Activated naive CD4-positive, alpha-beta T cell treated with anti-CD3 and anti-CD28 coated beads for 36 hours (primary cell): ENCODE measurements at regions of chr1 and their contacts with region 1.

Region 1: DNA sequence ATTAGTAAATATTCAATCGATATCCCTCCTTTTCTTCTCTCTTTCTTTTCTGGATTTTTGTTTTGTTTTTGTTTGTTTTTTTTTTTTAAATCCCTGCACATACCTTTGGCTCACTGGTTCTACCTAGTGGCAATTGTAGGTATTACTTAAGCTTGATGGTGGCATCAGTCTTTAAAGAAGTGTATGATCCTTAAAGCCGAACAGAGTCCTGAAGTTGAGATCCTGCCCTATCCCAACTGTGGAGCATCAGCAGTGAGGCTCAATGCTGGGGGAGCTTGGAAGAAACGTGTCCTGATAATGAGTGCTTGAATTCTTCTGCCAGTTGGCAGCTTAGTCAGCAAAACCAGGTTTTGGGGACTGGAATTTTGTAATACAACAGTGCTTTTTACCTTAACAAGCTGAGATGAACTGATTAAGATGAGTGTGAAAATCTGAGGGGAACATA is 60.8 kb downstream of the FASLG start:
- DNase-seq: no peak
- H3K4me3 Mint-ChIP-seq: no peak overlapping the region
- H3K27ac Mint-ChIP-seq: no peak overlapping the region
- H3K4me1 Mint-ChIP-seq: peaks cover 33% of the 10 kb centered on the region
- H3K27me3 Mint-ChIP-seq: peaks cover 3% of the 10 kb centered on the region

Region 2: DNA sequence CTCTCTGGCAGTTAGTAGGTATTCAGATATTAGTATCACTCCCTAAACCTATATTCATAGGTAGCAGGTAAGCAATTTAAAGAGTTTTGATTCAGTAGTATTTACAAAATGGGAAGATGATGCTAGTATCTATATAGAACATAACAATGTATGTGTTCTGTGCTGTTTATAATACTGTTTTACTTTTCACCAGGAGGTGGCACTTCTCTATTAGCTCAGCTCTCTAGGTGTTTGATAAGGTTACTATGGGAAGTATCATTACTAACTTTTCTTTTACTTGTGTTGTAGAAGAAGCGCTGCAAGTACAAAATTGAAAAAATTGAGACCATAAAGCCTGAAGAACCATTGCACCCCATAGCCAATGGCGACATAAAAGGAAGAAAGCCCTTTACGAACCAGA is 110.2 kb before region 1 on chr1:
- CTCF ChIA-PET with region 1: interaction called, 117 read pairs
- intact Hi-C with region 1: loop called (anchors 1 kb)
- DNase-seq: no peak
- H3K4me3 Mint-ChIP-seq: no peak overlapping the region
- H3K27ac Mint-ChIP-seq: no peak overlapping the region
- H3K4me1 Mint-ChIP-seq: peaks cover 2% of the 10 kb centered on the region
- H3K27me3 Mint-ChIP-seq: no peaks in the 10 kb centered on the region

Region 3: DNA sequence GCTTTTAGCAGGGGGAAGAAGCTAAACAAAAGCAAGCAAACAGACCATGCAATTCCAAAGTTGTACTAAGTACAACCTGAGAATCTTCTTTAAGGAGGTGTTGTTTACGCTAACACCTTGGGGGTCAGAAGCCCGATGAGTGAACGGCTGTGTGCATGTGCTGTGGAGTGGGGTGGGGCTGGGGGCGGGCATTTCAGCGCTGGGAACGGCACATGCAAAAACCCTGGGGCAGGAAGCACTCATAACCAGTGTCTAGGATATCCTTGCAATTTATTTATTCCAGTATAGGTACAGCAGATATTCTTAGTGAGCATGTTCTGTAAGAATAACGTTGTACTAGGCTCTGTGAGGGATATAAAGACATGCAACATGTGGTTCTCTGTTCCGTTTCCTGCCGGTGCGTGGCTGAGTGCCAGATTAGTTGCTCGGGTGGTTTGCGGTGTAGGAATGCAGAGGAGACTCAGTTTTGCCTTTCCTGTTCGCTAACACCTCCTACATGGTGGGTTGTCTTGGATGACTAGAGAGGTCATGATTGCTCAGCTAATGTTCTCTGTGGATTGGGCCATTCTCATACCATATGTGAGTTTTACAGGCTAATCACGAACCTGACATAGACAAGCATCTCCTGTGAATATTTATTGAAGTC is 57.1 kb before region 1 on chr1:
- CTCF ChIA-PET with region 1: interaction called, 22 read pairs
- intact Hi-C with region 1: loop called (anchors 2 kb)
- DNase-seq: peak; percentile 96
- H3K4me3 Mint-ChIP-seq: peak overlapping the region; percentile 26
- H3K27ac Mint-ChIP-seq: peak overlapping the region; percentile 60
- H3K4me1 Mint-ChIP-seq: peaks cover 68% of the 10 kb centered on the region
- H3K27me3 Mint-ChIP-seq: peaks cover 3% of the 10 kb centered on the region

Region 4: DNA sequence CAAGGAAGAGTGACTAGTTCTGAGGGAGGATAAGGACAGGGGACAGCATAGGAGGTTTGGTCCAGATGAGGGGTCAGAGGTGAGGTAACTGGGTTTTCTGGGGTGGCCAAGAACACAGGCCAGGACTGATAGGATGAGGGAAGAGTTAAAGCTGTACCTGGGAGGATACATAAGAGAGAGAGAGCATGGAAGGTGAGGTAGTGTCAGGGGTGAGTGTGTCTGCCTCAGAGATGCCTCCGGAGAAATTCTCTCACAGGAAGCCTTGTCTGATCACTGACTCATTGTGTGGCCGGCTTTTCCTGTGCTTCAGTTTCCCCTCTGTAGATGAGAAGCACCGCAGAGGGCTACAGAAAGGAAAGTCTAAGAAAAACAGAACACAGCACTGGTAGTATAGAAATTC is 20.6 kb before region 1 on chr1:
- CTCF ChIA-PET with region 1: interaction called, 4 read pairs
- intact Hi-C with region 1: loop called (anchors 2 kb)
- DNase-seq: peak; percentile 88
- H3K4me3 Mint-ChIP-seq: peak overlapping the region; percentile 36
- H3K27ac Mint-ChIP-seq: peak overlapping the region; percentile 89
- H3K4me1 Mint-ChIP-seq: peaks cover 53% of the 10 kb centered on the region
- H3K27me3 Mint-ChIP-seq: no peaks in the 10 kb centered on the region